BJ (cell line): ENCODE measurements at regions of chr7 and their contacts with region 1.

Region 1: GRCh38 chr7:100358027-100358865 is at the start of gene PILRB:
- DNase-seq: no peak
- H3K4me3 ChIP-seq: no peak within 1 kb of the TSS
- H3K27me3 ChIP-seq: no peaks in the 10 kb centered on the region
- CTCF ChIP-seq: no peak
- polyA plus RNA-seq, gene PILRB: 10.6 and 25.4 TPM in 2 replicates

Region 2: GRCh38 chr7:100346921-100347320 is 11.3 kb before region 1 on chr7:
- CTCF ChIA-PET with region 1: interaction called, 13 read pairs
- POLR2A ChIA-PET with region 1: no interaction called
- DNase-seq: no peak
- H3K4me3 ChIP-seq: no peak overlapping the region
- H3K27me3 ChIP-seq: no peaks in the 10 kb centered on the region
- CTCF ChIP-seq: no peak